SK-N-SH (cell line): ENCODE measurements at regions of chr10 and their contacts with region 1.

Region 1: GRCh38 chr10:28393966-28394568 is 91.2 kb upstream of the MPP7 start:
- DNase-seq: peak; percentile 69
- H3K4me3 ChIP-seq: peak overlapping the region in 1 of 2 experiments; percentile 24; a peak in 1 of 4 replicates
- H3K27ac ChIP-seq: no peak overlapping the region
- H3K4me1 ChIP-seq: no peaks in the 10 kb centered on the region
- H3K27me3 ChIP-seq: peaks cover 16% of the 10 kb centered on the region; the same call in 1 of the 2 replicates
- CTCF ChIP-seq: peak; percentile 96
- EP300 ChIP-seq: no peak
- RAD21 ChIP-seq: peak; percentile 61

Region 2: DNA sequence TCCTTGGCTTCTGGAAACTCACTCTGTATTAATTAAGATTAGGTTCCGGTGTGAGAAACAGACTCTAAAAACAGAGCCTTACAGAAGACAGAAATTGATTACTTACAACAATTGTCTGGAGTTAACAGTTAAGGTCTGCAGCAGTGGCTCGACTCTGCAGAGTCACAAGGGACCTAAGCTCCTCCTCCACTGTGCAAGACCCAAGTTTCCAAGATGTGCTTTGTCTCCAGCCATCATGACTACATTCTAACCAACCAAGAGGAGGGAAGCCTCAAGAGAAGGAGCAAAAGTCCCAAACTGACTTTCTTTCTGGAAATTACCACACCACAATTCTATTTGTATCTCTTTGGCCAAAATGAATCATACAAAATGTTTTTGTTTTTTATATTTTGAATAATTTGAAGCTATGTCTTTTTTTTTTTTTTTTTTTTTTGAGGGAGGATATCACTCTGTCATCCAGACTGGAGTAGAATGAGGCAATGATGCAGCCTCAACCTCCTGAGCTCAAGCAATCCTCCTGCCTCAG is 381.0 kb before region 1 on chr10:
- CTCF ChIA-PET with region 1: no interaction called
- POLR2A ChIA-PET with region 1: no interaction called
- DNase-seq: no peak
- H3K4me3 ChIP-seq: no peak overlapping the region
- H3K27ac ChIP-seq: no peak overlapping the region
- H3K4me1 ChIP-seq: no peaks in the 10 kb centered on the region
- H3K27me3 ChIP-seq: no peaks in the 10 kb centered on the region
- CTCF ChIP-seq: no peak
- EP300 ChIP-seq: no peak
- RAD21 ChIP-seq: no peak

Region 3: GRCh38 chr10:28250782-28251181 is 143.3 kb before region 1 on chr10:
- CTCF ChIA-PET with region 1: interaction called, 10 read pairs
- POLR2A ChIA-PET with region 1: no interaction called
- DNase-seq: no peak
- H3K4me3 ChIP-seq: no peak overlapping the region
- H3K27ac ChIP-seq: no peak overlapping the region
- H3K4me1 ChIP-seq: peaks cover 0 to 11% of the 10 kb centered on the region in 2 experiments; a peak in 2 of 4 replicates
- H3K27me3 ChIP-seq: peaks cover 23% of the 10 kb centered on the region; the same call in 1 of the 2 replicates
- CTCF ChIP-seq: peak; percentile 68
- EP300 ChIP-seq: no peak
- RAD21 ChIP-seq: peak; percentile 61

Region 4: DNA sequence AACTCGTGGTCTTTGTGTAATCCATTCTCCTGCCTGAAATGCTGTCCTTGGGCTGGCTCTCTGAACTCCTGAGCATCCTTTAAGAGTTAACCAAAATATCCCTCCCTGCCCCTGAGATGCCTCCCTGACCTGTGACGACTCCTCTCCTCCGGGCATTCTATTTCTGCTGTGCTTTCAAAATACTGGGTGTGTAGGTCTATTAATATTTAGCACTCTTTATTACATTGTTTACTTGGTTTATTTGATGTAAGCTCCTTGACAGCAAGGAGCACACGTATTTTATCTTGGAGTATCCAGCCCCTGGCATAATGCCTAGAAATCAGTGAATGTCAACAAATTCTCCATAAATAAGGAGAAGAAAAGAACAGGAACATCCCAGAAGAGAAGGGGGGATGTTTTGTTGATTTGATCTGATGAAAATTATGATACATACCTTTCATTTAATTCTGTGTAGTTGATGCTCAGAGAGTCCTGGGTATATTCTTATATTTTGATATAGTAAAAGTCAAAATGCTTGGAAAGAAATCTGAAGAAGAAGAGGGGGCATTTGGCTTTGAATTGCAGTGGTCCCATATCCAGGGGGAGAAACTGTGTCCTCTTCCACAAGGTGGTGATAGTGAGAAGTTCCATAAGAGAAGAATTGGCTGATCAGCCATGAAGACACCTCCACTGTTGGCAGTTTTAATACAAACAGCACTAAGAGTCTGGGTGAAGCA is 16.5 kb after region 1 on chr10:
- CTCF ChIA-PET with region 1: interaction called, 11 read pairs
- POLR2A ChIA-PET with region 1: no interaction called
- DNase-seq: peak; percentile 23
- H3K4me3 ChIP-seq: no peak overlapping the region
- H3K27ac ChIP-seq: no peak overlapping the region
- H3K4me1 ChIP-seq: no peaks in the 10 kb centered on the region
- H3K27me3 ChIP-seq: no peaks in the 10 kb centered on the region
- CTCF ChIP-seq: peak; percentile 19; the same call in 1 of the 2 replicates
- EP300 ChIP-seq: no peak
- RAD21 ChIP-seq: no peak; the same call in 1 of the 2 replicates

Region 5: DNA sequence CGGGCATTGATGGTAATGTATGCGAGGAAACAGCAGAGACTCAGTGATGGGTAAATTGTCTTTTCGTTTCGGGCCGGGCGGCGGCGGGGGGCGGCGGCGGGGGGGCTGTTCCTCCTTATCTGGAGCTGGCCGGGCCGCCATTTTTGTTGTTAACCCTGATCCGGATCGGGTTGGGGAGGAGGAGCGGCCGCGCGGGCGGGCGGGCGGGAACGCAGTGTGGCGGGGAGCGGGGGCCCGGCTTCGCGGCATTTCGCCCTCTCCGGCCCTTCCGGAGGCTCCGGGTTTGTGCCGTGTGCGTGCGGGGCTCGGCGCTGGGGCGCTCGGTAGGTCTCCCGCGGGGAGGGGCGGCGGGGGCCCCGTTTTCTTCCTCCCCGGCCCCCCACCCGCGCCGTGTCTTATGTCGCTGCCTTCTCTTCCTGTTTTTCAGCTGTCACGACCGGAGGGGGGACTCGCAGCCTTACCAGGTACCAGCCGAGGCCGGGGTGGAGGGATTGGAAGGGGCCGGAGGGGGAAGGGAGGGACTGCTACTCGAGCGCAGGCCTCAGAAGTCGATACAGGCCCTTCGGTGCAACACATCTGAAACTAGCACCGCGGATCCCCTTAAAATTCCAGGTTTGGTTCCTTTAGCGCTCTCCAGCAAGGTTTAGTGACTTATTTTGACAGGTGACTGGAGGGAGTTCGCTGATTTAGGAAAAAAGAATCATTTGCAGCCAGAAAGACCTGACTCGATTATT is 139.7 kb after region 1 on chr10:
- CTCF ChIA-PET with region 1: no interaction called
- POLR2A ChIA-PET with region 1: no interaction called
- DNase-seq: peak; percentile 83
- H3K4me3 ChIP-seq: peak overlapping the region; percentile 68 to 92
- H3K27ac ChIP-seq: peak overlapping the region; percentile 71 to 100
- H3K4me1 ChIP-seq: peaks cover 14 to 15% of the 10 kb centered on the region in 2 experiments; a peak in 3 of 4 replicates
- H3K27me3 ChIP-seq: no peaks in the 10 kb centered on the region
- CTCF ChIP-seq: no peak
- EP300 ChIP-seq: no peak
- RAD21 ChIP-seq: no peak